ENCODE measurements at regions of chr2 and their contacts with region 1.

Region 1: GRCh38 chr2:102005989-102006885 is 14.5 kb downstream of the IL1R2 start:
- DNase-seq: peak in 3 of 9 donors; percentile 23 to 28 (median 24)
- ATAC-seq: peak; percentile 71
- H3K4me3 ChIP-seq: no peak overlapping the region
- H3K4me3 Mint-ChIP-seq: no peak overlapping the region
- H3K27ac ChIP-seq: no peak overlapping the region
- H3K27ac Mint-ChIP-seq: no peak overlapping the region
- H3K4me1 ChIP-seq: peaks cover 0 to 12% of the 10 kb centered on the region in 2 donors
- H3K4me1 Mint-ChIP-seq: peaks cover 0 to 9% (median 0%) of the 10 kb centered on the region in 7 donors
- H3K27me3 ChIP-seq: no peaks in the 10 kb centered on the region
- H3K27me3 Mint-ChIP-seq: peaks cover 0 to 16% (median 10%) of the 10 kb centered on the region in 5 donors

Region 2: DNA sequence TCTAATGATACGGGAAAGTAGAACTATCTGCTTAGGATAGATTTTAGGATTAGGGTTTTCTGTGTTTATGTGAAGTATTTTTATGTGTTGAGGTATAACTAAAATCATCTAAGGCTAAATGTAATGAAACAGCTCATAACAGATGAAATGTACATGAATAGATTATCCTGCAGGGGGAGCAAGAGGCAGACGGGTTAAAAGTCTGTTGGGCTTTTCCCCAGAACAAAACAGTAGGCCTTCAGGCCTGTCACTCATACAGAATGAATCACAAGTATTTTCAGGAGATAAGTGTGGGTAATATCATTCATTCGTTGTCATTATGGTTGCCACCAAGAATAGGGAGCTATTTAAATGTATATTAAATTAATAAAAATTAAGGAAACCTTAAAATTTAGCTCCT is 122.4 kb before region 1 on chr2:
- CTCF ChIA-PET with region 1: no interaction called
- POLR2A ChIA-PET with region 1: no interaction called
- intact Hi-C with region 1: loop called in 1 of 2 experiments (anchors 10 kb)
- DNase-seq: peak in 5 of 9 donors; percentile 28 to 45 (median 36)
- ATAC-seq: peak; percentile 87
- H3K4me3 ChIP-seq: no peak overlapping the region
- H3K4me3 Mint-ChIP-seq: no peak overlapping the region
- H3K27ac ChIP-seq: no peak overlapping the region
- H3K27ac Mint-ChIP-seq: peak overlapping the region in 4 of 9 donors; percentile 38 to 62 (median 52)
- H3K4me1 ChIP-seq: no peaks in the 10 kb centered on the region
- H3K4me1 Mint-ChIP-seq: peaks cover 0 to 16% (median 5%) of the 10 kb centered on the region in 7 donors
- H3K27me3 ChIP-seq: no peaks in the 10 kb centered on the region
- H3K27me3 Mint-ChIP-seq: no peaks in the 10 kb centered on the region

Region 3: DNA sequence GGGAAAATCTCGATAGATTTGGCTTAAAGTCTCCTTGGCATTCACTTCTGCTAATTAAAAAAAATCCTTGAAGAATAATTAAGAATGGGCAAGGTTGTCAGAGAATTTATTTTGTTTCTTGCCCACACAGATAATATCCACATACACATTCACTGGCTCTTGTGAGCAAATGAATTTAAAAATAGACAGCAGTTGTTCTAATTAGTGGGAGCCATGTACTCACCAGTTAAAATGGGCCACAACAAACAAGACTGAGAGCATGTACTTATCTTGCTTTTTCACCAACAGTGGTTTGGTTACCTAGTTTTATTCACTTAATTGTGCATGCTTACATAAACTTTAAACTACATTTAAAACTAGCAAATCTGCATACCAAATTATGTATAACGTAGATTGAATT is 809.0 kb after region 1 on chr2:
- CTCF ChIA-PET with region 1: no interaction called
- POLR2A ChIA-PET with region 1: no interaction called
- intact Hi-C with region 1: no loop called
- DNase-seq: no peak
- ATAC-seq: no peak
- H3K4me3 ChIP-seq: no peak overlapping the region
- H3K4me3 Mint-ChIP-seq: no peak overlapping the region
- H3K27ac ChIP-seq: no peak overlapping the region
- H3K27ac Mint-ChIP-seq: no peak overlapping the region
- H3K4me1 ChIP-seq: no peaks in the 10 kb centered on the region
- H3K4me1 Mint-ChIP-seq: no peaks in the 10 kb centered on the region
- H3K27me3 ChIP-seq: no peaks in the 10 kb centered on the region
- H3K27me3 Mint-ChIP-seq: no peaks in the 10 kb centered on the region

Measured in naive thymus-derived CD4-positive, alpha-beta T cell (primary cell).